ENCODE measurements at regions of chr2 and their contacts with region 1.

Region 1: GRCh38 chr2:112941753-112942658 is 31.0 kb downstream of the IL37 start:
- DNase-seq: peak; percentile 88
- ATAC-seq: peak; percentile 99
- H3K4me3 Mint-ChIP-seq: no peak overlapping the region
- H3K27ac Mint-ChIP-seq: no peak overlapping the region
- H3K4me1 Mint-ChIP-seq: peaks cover 9% of the 10 kb centered on the region
- H3K27me3 Mint-ChIP-seq: no peaks in the 10 kb centered on the region
- CTCF ChIP-seq: peak; percentile 84

Region 2: GRCh38 chr2:112764071-112765044 is 177.6 kb before region 1 on chr2 and contains the start of gene CKAP2L:
- CTCF ChIA-PET with region 1: interaction called, 10 read pairs
- POLR2A ChIA-PET with region 1: no interaction called
- intact Hi-C with region 1: no loop called
- DNase-seq: peak; percentile 99
- ATAC-seq: peak; percentile 98
- H3K4me3 Mint-ChIP-seq: peak within 1 kb of the TSS; percentile 97
- H3K27ac Mint-ChIP-seq: peak within 1 kb of the TSS; percentile 95
- H3K4me1 Mint-ChIP-seq: peaks cover 19% of the 10 kb centered on the region
- H3K27me3 Mint-ChIP-seq: no peaks in the 10 kb centered on the region
- CTCF ChIP-seq: no peak
- total RNA-seq, gene CKAP2L: 24.5 to 30.5 TPM

Region 3: DNA sequence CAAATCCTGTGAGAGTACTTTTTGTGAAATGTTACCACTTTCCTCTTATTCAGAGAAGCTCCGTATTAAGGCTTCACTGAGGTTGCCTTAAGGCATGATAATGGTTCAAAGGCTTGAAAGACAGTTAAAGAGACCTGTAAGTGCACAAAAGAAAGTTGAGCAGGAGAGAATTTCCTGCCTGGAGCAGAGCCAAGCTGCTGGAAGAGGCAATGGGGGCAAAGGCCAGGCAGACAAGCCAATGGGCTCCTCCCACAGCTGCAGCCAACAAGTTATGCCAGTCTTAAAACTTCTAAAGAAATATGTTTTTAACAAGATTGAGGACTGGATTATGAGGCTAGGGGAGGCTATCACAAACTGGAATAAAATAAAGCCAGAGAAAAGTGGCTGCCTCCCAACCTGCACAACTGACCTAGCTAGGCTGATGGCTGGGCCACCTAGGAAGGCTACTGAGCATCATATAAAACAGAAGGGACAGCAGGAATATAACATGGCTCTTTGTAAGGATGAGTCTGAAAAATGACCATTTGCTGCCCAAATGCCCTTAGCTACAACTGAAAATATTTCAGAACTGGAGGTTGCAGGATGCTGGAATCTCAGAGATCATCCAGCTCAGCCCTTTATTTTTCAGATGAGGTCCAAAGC is 107.5 kb before region 1 on chr2:
- CTCF ChIA-PET with region 1: interaction called, 18 read pairs
- POLR2A ChIA-PET with region 1: no interaction called
- intact Hi-C with region 1: no loop called
- DNase-seq: no peak
- ATAC-seq: no peak
- H3K4me3 Mint-ChIP-seq: no peak overlapping the region
- H3K27ac Mint-ChIP-seq: no peak overlapping the region
- H3K4me1 Mint-ChIP-seq: no peaks in the 10 kb centered on the region
- H3K27me3 Mint-ChIP-seq: peaks cover 23% of the 10 kb centered on the region
- CTCF ChIP-seq: no peak

Region 4: GRCh38 chr2:112904883-112905282 is 37.1 kb before region 1 on chr2:
- CTCF ChIA-PET with region 1: interaction called, 12 read pairs
- POLR2A ChIA-PET with region 1: no interaction called
- intact Hi-C with region 1: no loop called
- DNase-seq: no peak
- ATAC-seq: no peak
- H3K4me3 Mint-ChIP-seq: no peak overlapping the region
- H3K27ac Mint-ChIP-seq: no peak overlapping the region
- H3K4me1 Mint-ChIP-seq: no peaks in the 10 kb centered on the region
- H3K27me3 Mint-ChIP-seq: no peaks in the 10 kb centered on the region
- CTCF ChIP-seq: no peak

Region 5: GRCh38 chr2:112928856-112929255 is 13.2 kb before region 1 on chr2:
- CTCF ChIA-PET with region 1: interaction called, 29 read pairs
- POLR2A ChIA-PET with region 1: no interaction called
- intact Hi-C with region 1: no loop called
- DNase-seq: no peak
- ATAC-seq: no peak
- H3K4me3 Mint-ChIP-seq: no peak overlapping the region
- H3K27ac Mint-ChIP-seq: no peak overlapping the region
- H3K4me1 Mint-ChIP-seq: no peaks in the 10 kb centered on the region
- H3K27me3 Mint-ChIP-seq: no peaks in the 10 kb centered on the region
- CTCF ChIP-seq: no peak

Region 6: DNA sequence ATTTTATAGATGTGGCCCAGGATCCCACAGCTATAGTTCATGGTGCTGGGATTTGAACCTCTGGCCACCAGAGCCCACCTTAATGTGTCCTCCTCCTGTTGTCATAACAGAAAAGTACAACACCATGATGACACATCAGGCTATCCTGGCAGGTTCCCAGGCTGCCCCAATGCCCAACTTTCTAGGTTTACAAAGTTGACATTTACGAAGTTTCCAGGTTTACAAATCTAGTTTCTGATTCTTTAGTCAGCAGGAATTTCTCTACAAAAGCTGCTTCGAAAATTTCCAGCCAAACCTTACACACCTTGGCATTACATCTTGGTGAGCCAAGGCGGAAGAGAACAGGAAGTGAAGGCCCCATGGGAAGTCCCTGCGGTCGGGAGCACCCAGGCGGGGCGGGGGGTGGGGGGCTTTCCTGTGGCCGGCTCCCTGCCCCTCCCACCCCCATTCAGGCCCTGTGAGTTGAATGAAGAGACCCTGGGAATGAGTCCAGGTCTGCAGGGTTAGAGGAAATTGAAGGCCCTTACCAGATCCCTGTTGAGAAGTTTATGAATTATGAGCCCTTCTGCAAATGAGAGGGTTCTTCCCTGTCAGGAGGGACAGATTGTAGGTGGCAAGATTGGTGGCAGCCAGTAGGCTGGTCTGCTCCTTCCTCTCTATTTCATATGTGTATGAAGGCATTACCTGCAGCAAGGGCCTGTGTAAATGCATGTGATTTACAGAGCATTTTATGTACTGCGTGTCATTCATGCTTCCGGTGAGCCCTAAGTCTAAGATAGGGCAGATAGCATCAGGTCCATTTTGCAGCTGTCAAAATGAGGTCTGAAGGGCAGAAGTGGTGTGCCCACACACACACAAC is 174.3 kb after region 1 on chr2:
- CTCF ChIA-PET with region 1: no interaction called
- POLR2A ChIA-PET with region 1: no interaction called
- intact Hi-C with region 1: no loop called
- DNase-seq: peak; percentile 37
- ATAC-seq: peak; percentile 25
- H3K4me3 Mint-ChIP-seq: no peak overlapping the region
- H3K27ac Mint-ChIP-seq: peak overlapping the region; percentile 71
- H3K4me1 Mint-ChIP-seq: peaks cover 19% of the 10 kb centered on the region
- H3K27me3 Mint-ChIP-seq: peaks cover 5% of the 10 kb centered on the region
- CTCF ChIP-seq: no peak

Measured in activated CD8-positive, alpha-beta T cell treated with anti-CD3 and anti-CD28 coated beads for 36 hours (primary cell).